Posterior cingulate gyrus (tissue), 11 donors: ENCODE measurements at regions of chr19 and their contacts with region 1.

Region 1: DNA sequence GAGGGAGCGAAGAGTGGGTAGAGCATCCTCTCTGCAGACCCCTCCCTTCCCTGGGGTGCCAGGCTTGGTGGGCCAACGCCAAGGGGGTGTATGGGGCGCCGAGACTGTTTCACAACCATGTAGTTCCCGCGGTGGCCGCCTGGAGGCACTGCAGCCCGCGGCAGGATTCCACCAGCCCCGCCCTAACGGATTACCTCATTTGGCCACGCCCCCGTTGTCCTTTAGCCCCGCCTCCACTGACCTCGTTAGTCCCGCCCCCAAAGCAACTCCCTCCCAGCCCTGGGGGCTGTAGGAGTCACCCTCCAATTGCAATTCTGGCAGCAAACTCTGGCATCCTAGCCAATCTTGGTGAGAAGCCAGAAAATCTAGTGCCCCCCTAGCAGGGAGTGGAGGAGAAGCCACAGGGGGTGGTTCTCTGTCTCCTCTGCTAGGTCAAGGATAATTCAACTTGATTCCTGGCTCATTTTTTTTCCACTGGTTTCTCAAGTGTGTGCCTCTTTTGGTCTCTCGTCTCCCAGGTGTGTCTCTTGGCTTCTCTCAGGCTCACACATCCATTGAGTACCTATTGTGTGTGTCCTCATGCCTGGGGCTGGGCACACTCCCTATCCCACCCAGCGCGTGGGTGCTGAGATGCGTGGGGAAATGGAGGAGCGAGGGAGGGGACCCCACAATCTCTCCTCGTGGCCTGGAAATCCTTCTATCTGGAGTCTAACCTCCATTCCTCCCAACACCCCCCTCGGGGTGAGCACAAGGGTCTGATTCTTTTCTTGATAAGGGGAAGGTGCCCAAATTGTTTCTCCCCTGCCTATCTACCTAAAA is 2.0 kb downstream of the OLFM2 start:
- DNase-seq: peak; percentile 56 to 95 (median 74)

Region 2: DNA sequence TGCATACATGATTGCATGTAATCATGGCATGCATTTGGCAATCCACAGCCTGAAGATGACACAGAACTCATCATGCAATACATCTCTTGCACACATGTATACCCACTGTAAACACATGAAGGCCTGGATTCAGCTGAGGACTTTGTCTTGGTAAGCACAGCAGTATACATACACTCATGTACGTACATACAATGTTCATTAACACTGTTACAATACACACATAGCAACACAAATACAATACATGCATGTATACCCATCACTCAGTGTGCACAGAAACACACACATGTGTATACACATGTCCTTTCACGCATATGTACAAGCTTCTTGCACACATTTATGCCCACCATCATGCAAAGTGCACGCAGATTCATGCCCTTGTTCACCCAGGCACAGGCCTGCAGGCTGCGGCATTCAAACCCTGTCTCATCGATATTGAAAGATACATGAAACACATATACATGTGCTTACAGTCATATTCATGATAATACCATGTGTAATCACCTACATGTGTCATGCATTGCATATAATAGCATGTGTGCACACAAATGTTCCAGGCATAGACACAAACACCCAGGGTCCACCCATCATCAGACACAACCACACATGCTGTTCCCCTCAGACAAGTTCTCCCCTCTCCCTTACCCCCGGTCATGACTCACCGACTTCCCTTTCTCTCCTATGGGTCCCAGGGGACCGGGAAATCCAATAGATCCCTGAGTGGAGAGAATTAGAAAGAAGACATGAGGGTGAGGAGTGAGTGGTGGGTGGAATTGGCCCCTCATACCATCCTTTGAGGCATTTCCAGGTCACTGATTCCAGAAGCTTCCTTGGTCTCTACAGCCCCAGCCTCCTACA is 47.3 kb after region 1 on chr19:
- intact Hi-C with region 1: no loop called
- DNase-seq: peak in 1 of 10 donors; percentile 1

Region 3: DNA sequence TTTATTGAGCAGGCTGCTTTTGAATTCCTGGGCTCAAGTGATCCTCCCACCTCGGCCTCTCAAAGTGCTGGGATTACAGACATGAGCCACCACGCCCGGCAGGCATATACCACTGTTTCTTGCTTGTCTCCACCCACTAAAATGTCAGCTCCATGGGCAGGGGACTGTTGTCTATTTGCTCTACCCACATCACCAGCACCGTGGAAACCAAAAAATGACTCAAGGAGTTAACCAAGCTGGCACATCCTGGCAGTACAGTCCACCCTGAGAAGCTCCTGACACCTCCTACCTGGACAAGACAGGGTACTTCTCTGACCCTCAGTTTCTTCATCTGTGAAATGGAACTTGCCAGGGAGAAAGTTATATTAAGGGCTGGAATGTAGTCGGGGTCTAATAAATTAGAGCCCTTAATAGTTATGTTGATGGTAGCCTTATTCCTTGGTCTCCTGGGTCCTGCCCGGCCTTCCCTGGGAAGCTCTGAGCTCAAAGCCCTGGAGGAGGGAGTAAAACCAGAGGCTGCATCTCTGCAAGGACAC is 92.9 kb after region 1 on chr19:
- intact Hi-C with region 1: loop called (anchors 1 kb)
- DNase-seq: no peak

Region 4: DNA sequence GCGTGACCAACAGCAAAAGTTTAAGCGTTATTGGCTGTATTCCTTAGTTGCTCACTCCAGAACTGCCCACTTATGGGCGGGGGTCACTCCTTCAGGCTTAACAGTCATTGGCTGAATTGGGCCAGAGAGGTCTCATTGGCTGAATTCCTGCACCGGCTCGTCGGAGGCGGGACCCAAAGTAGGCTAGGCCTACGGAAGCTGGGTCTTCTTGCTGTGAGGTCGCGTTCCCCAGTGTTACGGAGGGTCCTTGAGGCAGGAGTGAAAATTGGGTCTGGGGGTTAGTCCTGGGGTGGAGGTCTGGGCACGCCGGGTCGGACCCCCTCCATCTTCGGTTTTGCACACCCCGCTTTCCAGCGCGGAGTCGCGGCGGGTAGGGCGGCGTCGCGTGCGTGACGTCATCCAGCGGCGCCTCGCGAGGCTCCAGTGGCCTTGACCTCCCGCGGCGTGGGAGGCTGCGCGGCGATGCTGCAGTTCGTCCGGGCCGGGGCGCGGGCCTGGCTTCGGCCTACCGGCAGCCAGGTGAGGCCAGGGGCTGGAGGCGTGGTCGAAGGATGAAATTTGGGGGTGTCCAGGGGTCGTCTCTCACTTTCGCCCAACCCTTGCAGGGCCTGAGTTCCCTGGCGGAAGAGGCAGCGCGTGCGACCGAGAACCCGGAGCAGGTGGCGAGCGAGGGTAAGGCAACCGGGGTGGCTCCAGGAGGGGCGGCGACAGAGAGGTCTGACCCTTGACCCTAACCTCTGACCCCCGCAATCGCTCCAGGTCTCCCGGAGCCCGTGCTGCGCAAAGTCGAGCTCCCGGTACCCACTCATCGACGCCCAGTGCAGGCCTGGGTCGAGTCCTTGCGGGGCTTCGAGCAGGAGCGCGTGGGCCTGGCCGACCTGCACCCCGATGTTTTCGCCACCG is 317.7 kb after region 1 on chr19 and contains the start of gene MRPL4:
- intact Hi-C with region 1: loop called (anchors 5 kb)
- DNase-seq: peak; percentile 89 to 99 (median 94)

Region 5: DNA sequence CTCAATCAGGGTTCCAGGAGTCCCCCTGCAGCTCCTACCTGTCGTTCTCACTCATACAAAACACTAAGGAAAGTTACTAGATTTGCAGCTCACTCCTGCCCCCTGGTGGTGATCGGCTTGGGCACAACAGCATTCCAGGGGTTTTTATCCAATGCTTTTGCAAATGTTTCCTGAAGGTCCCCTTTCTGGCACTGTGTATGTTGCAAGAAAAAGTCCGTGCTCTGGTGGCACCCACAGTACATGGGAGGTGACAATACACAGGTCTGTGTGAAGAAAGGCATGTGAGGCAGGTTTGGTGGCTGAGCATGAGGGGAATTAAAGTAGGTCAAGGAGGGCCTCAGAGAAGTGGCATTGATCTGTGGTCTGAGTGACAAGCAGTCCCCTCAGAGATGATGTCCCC is 454.6 kb after region 1 on chr19:
- intact Hi-C with region 1: loop called (anchors 2 kb)
- DNase-seq: peak; percentile 70 to 97 (median 92)